ENCODE measurements at regions of chr12 and their contacts with region 1.

Region 1: DNA sequence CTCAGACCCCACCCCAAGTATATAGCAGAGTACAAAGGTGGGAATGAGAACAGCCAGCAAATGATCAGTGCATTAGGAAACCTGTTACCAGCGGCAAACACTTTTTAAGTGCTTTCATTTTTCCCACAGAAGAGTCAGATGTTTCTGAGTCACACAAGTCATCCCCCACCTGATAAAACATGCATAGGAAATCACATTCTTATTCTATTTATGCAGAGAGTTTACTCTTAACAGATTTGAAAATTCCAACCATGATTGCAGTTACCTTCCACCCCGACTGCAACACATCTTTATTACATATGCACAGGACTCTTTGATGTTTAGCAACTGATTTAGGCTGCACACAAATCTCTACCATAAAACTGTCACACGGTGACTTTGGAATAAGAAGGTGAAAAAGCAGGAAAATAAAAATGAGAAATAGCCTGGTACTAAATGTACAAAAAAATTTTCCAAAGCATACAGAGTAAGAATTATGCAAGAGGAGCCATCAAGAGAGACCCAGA is 236.4 kb downstream of the PAWR start:
- DNase-seq: peak; percentile 30 to 35
- H3K4me3 ChIP-seq: peak overlapping the region; percentile 15; the same call in 1 of the 2 replicates
- H3K4me3 Mint-ChIP-seq: peak overlapping the region; percentile 53
- H3K27ac Mint-ChIP-seq: peak overlapping the region; percentile 81
- H3K4me1 ChIP-seq: peaks cover 29% of the 10 kb centered on the region
- H3K4me1 Mint-ChIP-seq: peaks cover 26% of the 10 kb centered on the region
- H3K27me3 ChIP-seq: no peaks in the 10 kb centered on the region
- H3K27me3 Mint-ChIP-seq: no peaks in the 10 kb centered on the region
- CTCF ChIP-seq: no peak

Region 2: GRCh38 chr12:79388011-79388410 is 66.4 kb before region 1 on chr12:
- CTCF ChIA-PET with region 1: no interaction called
- POLR2A ChIA-PET with region 1: no interaction called
- intact Hi-C with region 1: no loop called
- DNase-seq: no peak
- H3K4me3 ChIP-seq: no peak overlapping the region
- H3K4me3 Mint-ChIP-seq: no peak overlapping the region
- H3K27ac Mint-ChIP-seq: no peak overlapping the region
- H3K4me1 ChIP-seq: no peaks in the 10 kb centered on the region
- H3K4me1 Mint-ChIP-seq: no peaks in the 10 kb centered on the region
- H3K27me3 ChIP-seq: no peaks in the 10 kb centered on the region
- H3K27me3 Mint-ChIP-seq: no peaks in the 10 kb centered on the region
- CTCF ChIP-seq: no peak

Region 3: GRCh38 chr12:79442396-79442795 is 12.0 kb before region 1 on chr12:
- CTCF ChIA-PET with region 1: no interaction called
- POLR2A ChIA-PET with region 1: no interaction called
- intact Hi-C with region 1: loop called (anchors 1 kb)
- DNase-seq: no peak
- H3K4me3 ChIP-seq: no peak overlapping the region
- H3K4me3 Mint-ChIP-seq: no peak overlapping the region
- H3K27ac Mint-ChIP-seq: no peak overlapping the region
- H3K4me1 ChIP-seq: peaks cover 11% of the 10 kb centered on the region
- H3K4me1 Mint-ChIP-seq: peaks cover 27% of the 10 kb centered on the region
- H3K27me3 ChIP-seq: no peaks in the 10 kb centered on the region
- H3K27me3 Mint-ChIP-seq: no peaks in the 10 kb centered on the region
- CTCF ChIP-seq: no peak

Region 4: DNA sequence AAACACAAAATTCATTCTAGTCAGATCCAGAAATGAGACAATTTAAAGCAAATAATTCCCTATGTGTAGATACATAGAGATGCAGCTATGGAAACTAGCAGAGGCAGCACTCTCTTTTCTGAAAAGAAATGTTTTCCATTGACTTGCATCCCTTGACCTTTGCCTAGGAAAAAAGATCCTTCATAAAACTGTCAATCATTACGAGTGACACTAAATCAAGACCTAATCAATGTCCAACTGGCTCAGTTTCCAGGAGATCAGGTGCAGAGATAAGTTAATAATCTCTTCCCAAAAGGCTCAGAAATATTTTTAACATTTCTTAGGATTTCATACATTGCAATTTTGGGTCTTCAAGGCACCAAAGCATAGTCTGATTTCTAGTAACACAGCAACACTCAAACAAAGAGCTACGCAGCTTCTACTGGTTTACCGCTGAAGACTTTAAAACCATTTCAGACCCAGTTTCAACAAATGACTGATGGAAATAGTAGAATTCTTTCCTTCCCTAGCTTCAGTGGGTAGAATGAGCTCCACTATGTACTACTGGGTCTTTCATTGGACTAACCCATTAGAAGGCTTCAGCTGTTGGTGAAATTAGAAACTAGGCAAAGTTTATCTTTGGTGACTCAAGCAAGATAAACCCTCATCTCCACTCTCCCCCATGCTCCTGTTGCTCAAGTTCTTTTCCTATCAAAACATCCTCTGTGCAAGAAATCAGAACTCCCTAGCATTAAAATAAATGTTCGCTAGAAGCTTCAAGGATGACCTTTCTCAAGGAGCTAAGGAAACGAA is 76.9 kb after region 1 on chr12:
- CTCF ChIA-PET with region 1: interaction called, 3 read pairs
- POLR2A ChIA-PET with region 1: no interaction called
- intact Hi-C with region 1: loop called (anchors 1 kb)
- DNase-seq: no peak
- H3K4me3 ChIP-seq: no peak overlapping the region
- H3K4me3 Mint-ChIP-seq: no peak overlapping the region
- H3K27ac Mint-ChIP-seq: peak overlapping the region; percentile 78
- H3K4me1 ChIP-seq: peaks cover 62% of the 10 kb centered on the region
- H3K4me1 Mint-ChIP-seq: peaks cover 36% of the 10 kb centered on the region
- H3K27me3 ChIP-seq: no peaks in the 10 kb centered on the region
- H3K27me3 Mint-ChIP-seq: no peaks in the 10 kb centered on the region
- CTCF ChIP-seq: no peak